Right ventricle myocardium inferior (tissue), 1 donor: ENCODE measurements at regions of chr11 and their contacts with region 1.

Region 1: DNA sequence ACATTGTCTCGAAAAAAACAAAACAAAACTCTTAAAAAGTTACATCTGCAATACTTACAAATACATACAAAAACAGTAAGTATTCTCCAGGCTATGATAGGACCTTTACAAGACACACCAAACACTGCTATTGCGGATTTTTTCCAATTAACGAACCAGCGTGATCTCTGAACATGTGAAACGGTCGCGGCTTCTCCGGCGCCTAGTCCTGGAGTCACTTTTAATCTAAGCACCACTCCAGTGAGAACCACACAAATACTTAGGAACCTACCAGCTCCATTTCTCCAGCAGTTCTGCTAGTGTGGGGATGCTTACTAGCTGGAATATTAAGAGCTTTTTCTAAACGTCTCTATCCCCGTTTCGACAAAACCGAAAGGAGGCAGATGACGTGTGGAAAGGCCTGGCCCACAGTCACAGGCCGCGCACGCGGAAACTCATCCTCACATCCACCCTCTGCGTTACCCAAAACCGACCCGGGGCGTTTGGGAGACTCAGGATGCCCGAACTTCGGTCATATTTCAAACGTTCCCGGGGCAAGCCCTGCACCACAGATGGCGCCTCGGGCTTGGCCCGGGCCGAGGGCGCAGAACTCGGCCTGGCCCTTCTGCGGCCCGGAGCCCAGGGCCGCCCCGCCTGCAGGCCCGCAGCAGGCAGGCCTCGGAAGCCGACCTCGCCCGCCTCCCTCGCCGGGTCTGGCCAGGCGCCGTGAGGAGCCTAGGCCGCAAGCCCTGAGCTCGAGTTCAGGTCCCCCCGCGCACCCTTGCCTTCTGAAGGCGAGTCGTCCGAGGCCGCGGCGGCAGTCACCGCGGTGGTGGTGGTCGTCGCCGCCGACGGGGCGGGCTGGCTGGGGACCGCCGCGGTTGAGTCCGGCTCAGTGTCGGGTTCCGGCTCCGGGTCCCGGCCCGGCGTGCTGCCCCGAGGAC is 575 bp downstream of the FNBP4 start:
- DNase-seq: peak; percentile 87
- ATAC-seq: peak; percentile 27

Region 2: DNA sequence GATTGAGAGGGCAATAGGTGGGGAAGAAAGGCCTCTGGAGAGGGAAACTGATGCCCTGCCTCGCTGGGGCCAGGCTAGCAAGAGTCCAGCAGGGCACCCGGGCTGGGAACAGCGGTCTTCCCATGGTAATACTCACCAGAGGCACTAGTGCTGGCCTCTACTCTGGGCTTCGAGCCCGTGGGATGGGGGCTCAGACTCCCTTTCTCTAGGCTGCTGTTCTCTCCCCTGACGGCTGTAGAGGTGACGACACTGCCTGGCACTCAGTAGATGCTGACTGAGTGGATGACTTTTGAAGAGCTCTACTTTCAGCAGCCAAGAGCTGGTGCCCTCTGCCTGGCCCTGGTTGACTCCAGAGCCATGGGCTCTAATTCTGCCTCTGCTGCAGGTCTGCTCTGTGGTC is 171.5 kb before region 1 on chr11:
- intact Hi-C with region 1: no loop called
- DNase-seq: no peak
- ATAC-seq: peak; percentile 92

Region 3: DNA sequence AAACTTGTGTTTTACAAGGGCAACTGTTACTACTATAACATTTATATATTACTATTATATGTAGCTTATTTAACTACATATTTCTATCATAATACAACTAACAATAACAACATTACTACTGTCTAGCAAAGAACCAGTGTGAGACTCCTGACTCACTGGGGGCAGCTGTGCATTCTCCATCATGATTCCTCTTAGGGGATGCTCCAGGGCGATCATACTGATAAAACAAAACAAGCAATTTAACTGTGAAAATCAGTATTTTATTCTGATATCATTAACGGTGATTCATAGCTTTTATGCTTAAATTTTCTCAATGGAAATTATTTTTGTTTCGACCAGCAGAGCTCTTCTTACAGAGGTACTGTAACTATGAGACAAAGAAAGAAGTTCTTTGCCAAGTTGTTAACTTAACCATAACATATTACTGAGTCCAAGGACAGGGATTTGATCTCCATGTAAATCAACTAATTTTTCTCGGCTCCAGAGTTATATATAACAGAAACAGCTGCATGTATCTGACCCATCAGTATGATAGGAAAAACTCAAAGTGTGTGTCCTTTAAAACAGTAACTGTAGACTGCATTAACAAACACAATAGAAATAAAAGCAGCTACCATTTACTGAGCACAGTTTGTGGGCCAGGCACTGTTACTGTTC is 25.3 kb after region 1 on chr11:
- intact Hi-C with region 1: loop called (anchors 2 kb)
- DNase-seq: no peak
- ATAC-seq: no peak

Region 4: DNA sequence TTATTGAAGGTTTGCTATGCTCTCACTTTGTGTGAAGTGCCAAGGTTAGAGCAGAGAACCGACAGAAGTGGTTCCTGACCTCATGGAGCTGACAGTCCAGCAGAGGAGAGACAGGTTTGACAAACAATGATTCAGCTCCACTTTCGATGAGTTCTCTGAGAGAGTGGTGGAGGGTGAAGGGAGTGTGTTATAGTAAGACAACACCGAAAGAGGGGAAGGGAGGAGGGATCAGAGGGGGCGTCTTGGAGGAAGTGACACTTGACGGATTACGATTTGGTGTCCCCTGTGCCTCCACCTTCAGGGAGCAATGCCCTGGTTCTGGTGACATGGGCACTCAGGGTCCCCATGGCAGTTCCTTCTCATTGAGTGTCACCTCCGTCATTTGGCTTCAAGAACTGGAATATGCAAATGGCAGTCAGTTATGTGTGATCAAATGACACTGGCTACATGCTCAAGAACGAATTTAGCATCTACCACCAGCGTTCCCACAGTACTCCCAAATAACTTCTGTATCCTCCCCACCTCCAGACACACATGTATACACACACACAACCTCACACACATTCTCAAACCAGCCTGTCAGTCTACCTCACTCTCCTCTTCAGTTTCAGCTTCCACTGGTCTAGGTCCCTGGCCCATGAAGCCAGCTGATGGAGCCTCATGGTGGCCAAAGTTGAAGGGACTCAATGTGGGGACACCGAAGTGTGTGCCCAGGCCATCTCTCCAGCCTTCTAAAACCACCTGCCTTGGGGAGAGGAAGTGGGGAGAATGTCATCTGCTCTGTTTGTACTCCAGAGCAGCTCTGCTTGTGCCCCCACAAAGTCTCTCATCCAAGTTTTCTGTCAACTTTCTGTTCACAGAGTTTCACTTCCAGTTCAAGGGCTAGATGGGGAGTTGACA is 112.9 kb after region 1 on chr11:
- intact Hi-C with region 1: no loop called
- DNase-seq: no peak
- ATAC-seq: no peak

Region 5: DNA sequence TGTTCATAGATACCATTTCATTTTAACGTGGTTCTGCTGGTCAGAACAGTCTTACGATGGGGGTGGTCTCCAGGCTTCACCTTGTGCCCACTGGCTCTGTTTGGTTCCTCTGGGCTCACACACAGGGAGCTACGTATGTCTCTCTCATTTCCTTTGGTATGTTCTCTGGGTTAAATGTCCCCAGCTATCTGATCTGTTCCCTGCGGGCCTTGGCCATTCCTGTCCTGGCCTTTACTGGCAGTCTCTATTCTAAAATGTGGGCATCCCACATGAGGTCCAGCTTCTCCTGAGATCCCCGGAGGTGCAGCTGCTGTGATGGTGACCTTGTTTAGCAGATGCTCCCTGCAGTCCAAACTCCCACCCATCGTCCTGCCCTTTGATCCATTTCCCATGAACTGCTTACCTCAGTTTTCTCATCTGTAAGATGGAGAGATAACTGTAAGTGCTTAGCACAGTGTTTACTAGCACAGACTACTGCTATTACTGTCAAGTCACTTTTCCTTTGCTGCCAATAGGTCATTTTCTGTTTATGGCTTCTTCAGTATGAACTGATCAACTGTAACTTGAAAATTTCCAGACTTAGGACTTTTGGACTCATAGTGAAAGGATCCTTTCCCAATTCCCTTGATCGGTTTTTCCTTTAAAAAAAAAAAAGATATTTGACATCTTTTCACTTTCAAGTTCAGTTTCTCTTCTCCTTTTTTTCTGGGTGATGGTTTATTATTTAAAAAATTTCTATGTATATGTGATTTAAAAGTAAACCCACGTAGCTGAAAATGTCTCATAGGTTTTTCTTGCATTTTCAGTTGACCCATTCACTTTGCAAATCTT is 306.7 kb after region 1 on chr11:
- intact Hi-C with region 1: no loop called
- DNase-seq: no peak
- ATAC-seq: no peak